Heart right ventricle (tissue), 16 donors: ENCODE measurements at regions of chr1 and their contacts with region 1.

Region 1: DNA sequence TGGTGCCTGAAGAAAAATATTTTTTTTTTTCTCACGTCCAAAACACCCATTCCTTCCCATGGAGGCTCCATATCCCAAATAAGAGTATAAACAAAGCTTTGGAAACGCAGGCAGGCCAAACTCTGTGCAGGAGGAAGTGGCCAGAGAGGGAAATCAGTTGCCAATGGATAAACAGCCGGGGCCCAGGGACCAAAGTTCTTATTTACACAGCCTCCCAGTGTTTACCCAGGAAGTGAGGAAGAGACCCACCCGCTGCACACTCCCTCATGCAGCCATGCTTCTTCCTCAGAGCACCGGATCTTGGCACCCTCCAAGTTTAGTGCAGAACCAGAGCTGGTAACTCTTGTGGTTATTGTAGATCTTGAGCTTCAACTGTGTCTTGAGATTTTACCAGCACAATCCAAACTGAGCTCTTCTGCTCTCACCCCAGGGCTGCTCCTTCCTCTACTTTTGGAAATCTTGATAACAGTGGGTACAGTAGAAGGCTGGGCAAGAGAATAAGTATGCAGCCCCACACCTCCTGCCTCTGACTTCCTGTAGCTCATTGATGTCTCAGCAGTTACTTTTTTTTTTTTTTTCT is 14.2 kb downstream of the MARCKSL1 start:
- DNase-seq: no peak
- ATAC-seq: peak in 1 of 8 donors; percentile 29
- H3K4me3 ChIP-seq: no peak overlapping the region
- H3K27ac ChIP-seq: peak overlapping the region in 3 of 10 donors; percentile 34 to 44 (median 37)
- H3K4me1 ChIP-seq: peaks cover 0 to 15% (median under 1%) of the 10 kb centered on the region in 9 donors
- H3K27me3 ChIP-seq: no peaks in the 10 kb centered on the region
- CTCF ChIP-seq: no peak

Region 2: GRCh38 chr1:32215629-32216480 is 105.9 kb before region 1 on chr1:
- intact Hi-C with region 1: loop called in 6 of 10 experiments (anchors 5 to 10 kb)
- DNase-seq: peak; percentile 44 to 58
- ATAC-seq: peak; percentile 65 to 85 (median 78)
- H3K4me3 ChIP-seq: no peak overlapping the region
- H3K27ac ChIP-seq: peak overlapping the region in 5 of 10 donors; percentile 11 to 41 (median 19)
- H3K4me1 ChIP-seq: peaks cover 2 to 20% (median 9%) of the 10 kb centered on the region in 9 donors
- H3K27me3 ChIP-seq: no peaks in the 10 kb centered on the region
- CTCF ChIP-seq: peak; percentile 41 to 85 (median 78)

Region 3: DNA sequence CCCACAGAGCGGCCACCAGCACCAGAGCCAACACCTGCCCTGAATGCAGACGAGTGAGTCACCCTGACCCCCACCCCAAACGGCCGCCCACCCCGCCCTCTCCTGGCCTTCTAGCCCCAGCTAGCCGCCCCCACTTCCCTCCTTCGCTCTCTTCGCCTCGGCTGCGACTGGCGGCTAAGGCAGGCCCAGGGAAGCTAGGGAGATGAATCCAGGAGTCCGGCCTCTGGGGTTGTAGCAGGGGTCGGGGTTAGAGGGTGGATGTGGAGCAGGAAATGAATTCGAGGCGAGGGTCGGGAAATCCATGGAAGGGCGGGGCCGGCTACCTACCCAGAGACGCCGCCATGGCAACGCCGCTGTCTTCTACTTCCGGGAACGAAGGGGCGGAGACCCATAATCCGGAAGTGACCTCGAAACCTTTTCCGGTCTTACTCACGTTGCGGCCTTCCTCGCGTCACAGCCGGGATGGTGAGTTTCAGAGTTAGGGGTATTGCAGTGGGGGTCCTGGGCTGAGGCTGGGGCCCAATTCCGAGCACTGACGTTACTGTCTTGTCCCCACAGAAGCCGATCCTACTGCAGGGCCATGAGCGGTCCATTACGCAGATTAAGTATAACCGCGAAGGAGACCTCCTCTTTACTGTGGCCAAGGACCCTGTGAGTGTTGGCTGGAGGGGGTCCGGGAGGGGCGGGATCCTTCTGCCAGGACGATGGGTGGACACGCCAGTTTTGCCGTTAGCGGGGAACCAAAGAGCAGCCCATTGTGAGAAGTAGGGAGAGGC is 99.6 kb before region 1 on chr1 and contains the starts of genes EIF3I and TMEM234:
- intact Hi-C with region 1: loop called in 6 of 10 experiments (anchors 5 to 10 kb)
- DNase-seq: peak; percentile 88 to 95
- ATAC-seq: peak; percentile 91 to 97 (median 96)
- H3K4me3 ChIP-seq: peak within 1 kb of the TSS; percentile 65 to 94 (median 84)
- H3K27ac ChIP-seq: peak within 1 kb of the TSS; percentile 69 to 95 (median 90)
- H3K4me1 ChIP-seq: peaks cover 5 to 36% (median 28%) of the 10 kb centered on the region in 9 donors
- H3K27me3 ChIP-seq: no peaks in the 10 kb centered on the region
- CTCF ChIP-seq: no peak
- total RNA-seq, gene EIF3I: 90.3 to 138 (median 103) TPM
- total RNA-seq, gene TMEM234: 8.1 to 12.8 (median 11.1) TPM

Region 4: DNA sequence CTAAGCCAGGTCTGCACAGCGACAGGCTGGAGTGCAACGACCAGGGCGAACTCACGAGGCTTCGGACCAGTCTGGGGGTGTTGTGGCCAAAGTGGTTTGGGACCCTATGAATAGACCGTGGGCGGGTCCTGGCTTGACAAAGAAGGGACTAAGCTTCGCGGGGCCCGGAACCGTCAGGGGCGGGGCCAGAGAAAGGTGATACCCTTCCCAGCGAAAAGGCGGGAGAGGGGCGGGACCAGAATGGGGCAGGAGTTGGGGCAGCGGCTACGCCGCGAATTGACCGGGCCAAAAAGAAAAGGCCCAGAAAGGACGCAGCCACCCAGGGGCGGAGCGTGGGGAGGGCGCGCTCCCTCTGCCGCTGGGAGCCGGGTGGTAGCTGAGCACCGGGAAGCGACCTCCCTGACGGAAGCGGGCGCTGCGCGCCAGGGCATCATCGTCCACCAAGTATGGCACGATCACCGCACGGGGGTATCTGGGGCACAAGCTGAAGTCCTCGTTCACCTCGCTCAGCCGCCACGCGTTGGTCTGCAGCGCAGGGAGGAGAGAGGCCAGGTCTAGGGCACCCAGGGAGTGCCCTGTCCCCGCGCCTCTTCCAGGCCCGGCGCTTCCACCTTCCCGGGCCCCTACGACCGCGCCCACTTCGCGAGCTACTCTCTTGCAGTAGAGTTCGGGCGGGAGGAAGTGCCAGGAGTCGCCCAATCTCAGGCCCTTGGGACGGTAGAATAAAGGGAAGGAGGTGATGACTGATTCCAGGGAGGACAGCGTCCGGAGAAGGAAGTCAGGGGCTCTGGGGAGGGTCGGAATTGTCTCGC is 81.5 kb before region 1 on chr1:
- intact Hi-C with region 1: loop called in 2 of 10 experiments (anchors 5 kb)
- DNase-seq: peak; percentile 68 to 73
- ATAC-seq: peak; percentile 65 to 83 (median 78)
- H3K4me3 ChIP-seq: peak overlapping the region; percentile 48 to 86 (median 72)
- H3K27ac ChIP-seq: peak overlapping the region; percentile 41 to 96 (median 88)
- H3K4me1 ChIP-seq: peaks cover 0 to 44% (median 28%) of the 10 kb centered on the region in 9 donors
- H3K27me3 ChIP-seq: peaks cover 0 to 10% (median 0%) of the 10 kb centered on the region in 7 donors
- CTCF ChIP-seq: peak in 5 of 9 donors; percentile 29 to 56 (median 50)